Left ventricle myocardium inferior (tissue), 1 donor: ENCODE measurements at regions of chr1 and their contacts with region 1.

Region 1: GRCh38 chr1:111720274-111720976 is 18.8 kb downstream of the INKA2 start:
- DNase-seq: peak; percentile 69
- H3K4me3 ChIP-seq: no peak overlapping the region
- H3K27ac ChIP-seq: peak overlapping the region; percentile 88
- H3K4me1 ChIP-seq: peaks cover 63% of the 10 kb centered on the region
- H3K27me3 ChIP-seq: no peaks in the 10 kb centered on the region
- CTCF ChIP-seq: no peak

Region 2: GRCh38 chr1:111747282-111747734 is 26.9 kb after region 1 on chr1:
- intact Hi-C with region 1: loop called (anchors 2 kb)
- DNase-seq: no peak
- H3K4me3 ChIP-seq: no peak overlapping the region
- H3K27ac ChIP-seq: peak overlapping the region; percentile 82
- H3K4me1 ChIP-seq: peaks cover 60% of the 10 kb centered on the region
- H3K27me3 ChIP-seq: no peaks in the 10 kb centered on the region
- CTCF ChIP-seq: peak; percentile 75